ENCODE measurements at regions of chr13 and their contacts with region 1.

Region 1: DNA sequence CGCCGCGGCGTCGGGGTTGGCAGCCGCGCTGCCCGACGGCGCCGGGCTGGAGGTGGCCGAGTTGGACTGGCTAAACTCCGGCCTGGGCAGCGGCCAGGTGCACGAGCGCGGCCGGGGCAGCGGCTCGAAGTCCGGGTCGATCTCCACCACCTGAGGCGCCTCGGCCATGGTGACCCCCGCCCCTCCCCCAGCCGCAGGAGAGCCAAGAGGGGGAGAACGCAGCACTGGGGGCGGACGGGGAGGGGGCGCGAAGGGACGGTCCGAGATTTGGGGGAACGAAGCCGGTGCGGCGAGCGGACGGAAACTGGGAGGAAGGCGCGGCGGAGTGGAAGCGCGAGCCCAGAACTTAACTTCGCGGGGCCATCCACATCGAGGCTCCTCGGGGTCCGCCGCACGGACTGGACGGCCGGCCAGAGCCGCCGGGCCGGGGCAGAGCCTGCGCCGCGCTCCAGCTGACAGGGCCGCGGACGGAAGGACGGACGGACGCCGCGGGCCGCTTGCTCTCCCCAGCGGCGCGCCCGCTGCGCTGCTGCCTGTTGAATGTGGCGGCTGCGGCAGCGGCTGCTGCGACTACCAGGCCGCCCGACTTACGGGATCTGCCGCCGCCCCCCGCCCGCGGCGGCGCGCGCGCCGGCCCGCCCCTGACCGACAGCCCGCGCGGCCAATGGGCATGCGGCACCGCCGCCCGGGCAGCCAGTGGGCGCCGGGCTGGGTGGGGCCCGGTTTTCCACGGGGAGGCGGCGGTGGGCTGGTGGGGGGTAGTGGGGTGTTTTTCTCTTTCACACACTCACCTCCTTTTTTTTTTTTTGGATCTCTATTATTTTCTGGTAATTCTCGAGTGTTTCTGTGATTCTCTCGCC is at the start of gene FOXO1:
- DNase-seq: peak; percentile 91 to 96 (median 94)
- H3K4me3 ChIP-seq: peak within 1 kb of the TSS; percentile 78
- H3K27ac ChIP-seq: peak within 1 kb of the TSS; percentile 88 to 99
- H3K4me1 ChIP-seq: peaks cover 7% of the 10 kb centered on the region
- H3K27me3 ChIP-seq: no peaks in the 10 kb centered on the region
- CTCF ChIP-seq: no peak
- EP300 ChIP-seq: no peak
- POLR2A ChIP-seq: peak; percentile 92
- total RNA-seq, gene FOXO1: 95.9 to 157 (median 117) TPM

Region 2: DNA sequence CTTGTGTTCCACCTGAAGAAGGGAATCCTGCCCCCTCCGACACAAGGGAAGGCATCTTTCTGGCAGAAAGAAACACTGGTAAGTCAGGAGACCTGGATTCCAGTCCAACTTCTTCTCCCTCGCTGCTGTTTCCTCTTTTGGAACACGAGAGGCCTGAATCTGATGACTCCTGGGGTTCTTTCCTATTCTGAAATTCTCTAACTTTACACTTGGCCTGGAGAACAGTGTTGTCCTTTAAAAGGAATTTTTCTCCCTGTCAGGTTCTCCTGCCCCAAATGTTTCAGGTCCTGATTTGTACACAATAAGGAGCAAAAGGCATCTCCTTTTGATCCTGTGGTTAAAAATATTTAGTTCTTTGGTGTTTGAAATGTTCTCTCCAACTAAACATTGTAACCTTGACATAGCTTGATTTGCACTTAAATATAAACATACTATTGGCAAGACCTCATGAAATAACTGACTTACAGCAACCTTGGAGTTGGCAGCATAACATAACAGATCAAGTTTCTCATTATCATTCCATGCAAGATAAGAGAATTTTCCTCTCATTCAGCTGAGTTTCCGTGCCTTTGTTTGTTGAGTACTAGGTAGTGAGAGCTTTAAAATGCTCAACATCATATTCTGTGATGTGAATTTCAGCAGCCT is 766.0 kb before region 1 on chr13:
- intact Hi-C with region 1: loop called in 1 of 4 experiments (anchors 10 kb)
- DNase-seq: peak in 1 of 5 donors; percentile 48
- H3K4me3 ChIP-seq: no peak overlapping the region
- H3K27ac ChIP-seq: peak overlapping the region; percentile 40 to 81
- H3K4me1 ChIP-seq: peaks cover 12% of the 10 kb centered on the region
- H3K27me3 ChIP-seq: no peaks in the 10 kb centered on the region
- CTCF ChIP-seq: no peak
- EP300 ChIP-seq: no peak
- POLR2A ChIP-seq: no peak

Region 3: GRCh38 chr13:40077396-40078027 is 588.8 kb before region 1 on chr13:
- intact Hi-C with region 1: loop called in 1 of 4 experiments (anchors 5 kb)
- DNase-seq: no peak
- H3K4me3 ChIP-seq: no peak overlapping the region
- H3K27ac ChIP-seq: no peak overlapping the region
- H3K4me1 ChIP-seq: peaks cover 8% of the 10 kb centered on the region
- H3K27me3 ChIP-seq: no peaks in the 10 kb centered on the region
- CTCF ChIP-seq: no peak
- EP300 ChIP-seq: no peak
- POLR2A ChIP-seq: no peak

Region 4: DNA sequence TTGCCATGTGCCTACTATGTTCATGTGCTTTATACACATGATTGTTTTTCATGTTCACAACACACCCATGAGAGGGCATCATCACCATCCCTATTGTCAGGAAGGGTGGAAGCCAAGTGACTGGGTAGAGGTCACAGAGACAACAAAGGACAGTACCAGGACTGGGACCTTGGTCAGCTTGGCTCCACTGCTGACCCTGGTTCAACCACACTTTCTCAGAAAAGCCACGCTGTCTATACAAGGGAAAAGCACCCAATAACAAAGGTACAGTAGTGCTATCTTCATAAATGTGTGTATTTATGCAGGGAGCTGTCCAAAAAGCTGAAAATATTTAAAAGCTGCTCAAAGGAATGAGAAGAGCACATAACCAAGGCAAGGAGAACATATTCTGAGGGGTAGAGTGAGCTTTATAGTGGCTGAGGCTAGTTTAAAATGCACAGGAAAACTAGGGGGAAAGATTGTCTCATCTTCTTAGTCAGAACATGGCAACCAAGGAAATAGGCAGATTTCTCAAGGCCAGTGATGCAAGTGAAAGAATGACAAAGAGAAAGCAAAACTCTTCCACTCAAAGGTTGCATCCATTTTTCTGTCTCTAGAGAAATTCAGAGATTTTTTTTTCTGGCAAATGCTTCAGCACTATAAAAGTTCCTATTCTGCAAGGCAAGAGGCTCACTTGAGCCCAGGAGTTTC is 414.8 kb before region 1 on chr13:
- intact Hi-C with region 1: loop called in 2 of 4 experiments (anchors 10 kb)
- DNase-seq: no peak
- H3K4me3 ChIP-seq: no peak overlapping the region
- H3K27ac ChIP-seq: peak overlapping the region in 1 of 2 donors; percentile 19
- H3K4me1 ChIP-seq: peaks cover 12% of the 10 kb centered on the region
- H3K27me3 ChIP-seq: no peaks in the 10 kb centered on the region
- CTCF ChIP-seq: no peak
- EP300 ChIP-seq: no peak
- POLR2A ChIP-seq: no peak

Region 5: DNA sequence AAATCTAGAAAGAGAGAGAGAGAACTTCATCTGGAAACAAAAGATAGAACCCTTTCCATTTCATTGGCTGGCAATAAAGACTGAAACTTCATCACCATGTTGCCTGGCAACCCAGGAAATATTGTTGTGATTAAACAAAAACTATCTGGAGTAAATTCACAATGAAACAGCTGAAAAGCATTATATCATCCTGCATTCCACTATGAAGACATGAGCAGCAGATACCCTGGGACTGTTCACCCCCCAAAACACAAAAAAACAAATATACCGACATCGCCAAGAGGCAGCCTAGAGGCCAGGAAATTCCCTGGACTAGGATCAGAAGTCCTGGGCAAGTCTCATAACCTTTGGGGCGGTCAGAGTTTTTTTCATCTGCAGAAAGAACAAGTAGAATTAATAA is 158.1 kb before region 1 on chr13:
- intact Hi-C with region 1: no loop called
- DNase-seq: peak in 1 of 5 donors; percentile 53
- H3K4me3 ChIP-seq: no peak overlapping the region
- H3K27ac ChIP-seq: peak overlapping the region in 1 of 2 donors; percentile 41
- H3K4me1 ChIP-seq: no peaks in the 10 kb centered on the region
- H3K27me3 ChIP-seq: no peaks in the 10 kb centered on the region
- CTCF ChIP-seq: no peak
- EP300 ChIP-seq: no peak
- POLR2A ChIP-seq: no peak

Region 6: GRCh38 chr13:40578055-40578454 is 88.2 kb before region 1 on chr13:
- intact Hi-C with region 1: loop called in 1 of 4 experiments (anchors 10 kb)
- DNase-seq: no peak
- H3K4me3 ChIP-seq: no peak overlapping the region
- H3K27ac ChIP-seq: no peak overlapping the region
- H3K4me1 ChIP-seq: peaks cover 43% of the 10 kb centered on the region
- H3K27me3 ChIP-seq: no peaks in the 10 kb centered on the region
- CTCF ChIP-seq: no peak
- EP300 ChIP-seq: no peak
- POLR2A ChIP-seq: no peak

Region 7: GRCh38 chr13:40732658-40733057 is 66.4 kb after region 1 on chr13:
- intact Hi-C with region 1: no loop called
- DNase-seq: no peak
- H3K4me3 ChIP-seq: no peak overlapping the region
- H3K27ac ChIP-seq: no peak overlapping the region
- H3K4me1 ChIP-seq: no peaks in the 10 kb centered on the region
- H3K27me3 ChIP-seq: no peaks in the 10 kb centered on the region
- CTCF ChIP-seq: no peak
- EP300 ChIP-seq: no peak
- POLR2A ChIP-seq: no peak